ENCODE measurements at regions of chr16 and their contacts with region 1.

Region 1: DNA sequence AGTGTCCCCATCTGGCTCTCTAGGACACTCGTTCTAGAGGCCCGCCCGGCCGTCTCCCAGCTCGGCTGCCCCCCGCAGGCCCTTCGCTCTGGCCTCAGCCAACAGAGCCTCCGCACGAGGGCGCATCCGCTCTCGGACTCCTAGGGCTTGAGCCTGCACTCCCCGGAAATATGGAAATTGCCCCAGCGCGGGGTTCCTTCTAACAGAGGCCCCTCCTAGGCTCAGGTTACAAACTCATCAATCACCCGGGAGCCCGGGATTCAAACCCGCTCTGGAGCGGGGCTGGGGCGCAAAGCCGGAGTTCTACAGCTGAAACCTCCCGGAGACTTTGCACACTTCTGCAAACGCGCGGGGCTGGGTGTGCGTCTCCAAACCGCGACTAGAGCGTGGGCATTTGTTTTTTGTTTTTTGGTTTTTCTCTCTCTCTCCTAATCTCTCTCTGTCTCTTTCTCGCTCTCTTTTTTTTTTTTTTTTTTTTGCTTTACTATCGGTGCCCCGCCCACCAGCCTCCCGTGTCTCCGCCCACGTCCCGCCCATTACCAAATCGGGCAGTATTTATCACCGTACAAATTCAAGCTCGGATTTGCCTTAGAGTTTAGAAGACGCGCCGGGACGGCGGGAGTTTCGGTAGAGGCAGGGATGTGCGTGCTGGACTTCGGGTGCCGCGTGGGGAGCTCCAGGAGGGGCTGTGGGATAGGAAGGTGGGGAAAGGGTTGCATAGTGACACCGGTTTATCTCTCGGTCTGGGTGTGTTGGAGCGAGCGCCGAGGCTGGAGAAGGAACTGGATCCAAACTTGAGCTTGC is 2.4 kb upstream of the FOXL1 start:
- DNase-seq: no peak
- H3K4me3 ChIP-seq: peak overlapping the region; percentile 73
- CTCF ChIP-seq: peak; percentile 82

Region 2: GRCh38 chr16:86444261-86444660 is 131.7 kb before region 1 on chr16:
- CTCF ChIA-PET with region 1: no interaction called
- POLR2A ChIA-PET with region 1: no interaction called
- DNase-seq: no peak
- H3K4me3 ChIP-seq: no peak overlapping the region
- CTCF ChIP-seq: no peak

Region 3: GRCh38 chr16:86476956-86477530 is 98.9 kb before region 1 on chr16:
- CTCF ChIA-PET with region 1: no interaction called
- POLR2A ChIA-PET with region 1: no interaction called
- DNase-seq: no peak
- H3K4me3 ChIP-seq: no peak overlapping the region
- CTCF ChIP-seq: no peak

Region 4: DNA sequence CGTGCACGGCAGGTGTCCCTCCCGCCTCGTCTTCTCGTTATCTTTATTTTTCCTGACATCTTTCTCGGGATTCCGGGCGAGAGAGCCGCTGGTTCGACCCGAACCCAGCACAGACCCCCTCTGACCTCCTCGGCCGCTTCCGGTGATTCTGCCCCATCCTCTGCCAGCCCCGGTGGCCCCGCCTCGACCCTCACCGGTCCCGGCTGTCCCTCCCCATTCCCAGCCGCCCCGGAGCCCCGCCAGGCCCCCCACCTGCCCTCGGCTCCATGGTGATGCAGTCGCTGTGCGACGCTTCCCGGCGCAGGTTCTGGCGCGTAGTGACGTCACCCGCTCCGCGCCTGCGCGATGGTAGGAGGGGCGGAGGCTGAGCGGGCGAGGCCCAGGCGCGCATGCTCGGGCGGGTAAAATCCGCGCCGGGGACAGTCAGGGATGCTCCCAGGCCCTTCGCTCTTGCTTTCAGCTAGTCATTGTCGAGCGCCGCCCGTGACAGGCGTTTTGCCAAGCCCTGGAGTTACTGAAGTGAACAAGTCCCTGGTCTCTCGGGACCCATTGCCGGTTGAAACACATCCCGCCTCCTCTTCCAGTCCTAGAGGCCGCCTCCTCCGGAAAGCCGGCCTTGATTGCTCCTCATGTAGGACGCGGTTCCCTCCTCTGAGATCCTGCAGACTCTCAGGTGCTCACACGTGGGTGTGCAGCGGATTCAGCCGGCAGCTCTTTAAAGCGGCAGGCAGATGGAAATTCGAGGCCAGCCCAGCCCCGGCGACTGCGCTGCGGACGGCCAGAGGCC is 20.8 kb before region 1 on chr16 and contains the start of gene MTHFSD:
- CTCF ChIA-PET with region 1: no interaction called
- POLR2A ChIA-PET with region 1: no interaction called
- DNase-seq: no peak
- H3K4me3 ChIP-seq: peak within 1 kb of the TSS; percentile 96
- CTCF ChIP-seq: no peak

Region 5: DNA sequence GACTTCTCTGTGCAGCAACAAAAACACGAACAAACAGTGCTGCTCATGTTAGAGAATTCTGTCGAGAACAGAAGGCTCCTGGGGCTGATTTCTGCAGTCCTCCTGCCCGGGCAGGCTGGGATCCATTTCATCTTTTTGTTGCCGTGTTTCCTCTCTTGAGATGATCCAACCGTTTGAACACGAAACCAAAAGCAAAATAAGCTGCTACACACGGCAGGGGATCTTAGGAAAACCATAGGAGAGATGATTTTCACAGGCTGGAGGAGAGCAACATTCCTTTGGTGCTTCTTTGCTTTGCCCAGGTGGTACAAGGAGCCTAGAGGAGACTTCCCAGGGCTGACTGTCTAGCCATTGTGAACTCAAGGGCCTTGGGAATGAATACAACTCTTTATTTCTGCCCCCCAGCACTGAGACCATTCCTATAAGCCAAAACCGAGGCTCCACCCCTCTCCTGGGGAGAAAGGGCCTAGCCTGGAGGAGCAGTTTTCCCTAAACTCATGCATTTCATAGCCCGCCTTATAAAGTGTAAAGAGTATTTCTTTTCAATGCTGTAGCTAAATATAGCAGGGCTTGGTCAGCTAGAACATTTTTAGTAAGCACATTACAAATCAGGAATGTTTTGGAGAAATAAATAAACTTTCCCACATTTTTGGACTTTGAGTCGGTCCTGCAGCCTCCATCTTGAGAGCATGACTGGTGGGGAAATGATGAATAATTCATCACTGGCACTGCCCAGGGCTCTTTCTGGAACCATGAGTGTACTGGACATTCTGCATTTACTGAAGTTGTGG is 10.1 kb after region 1 on chr16:
- CTCF ChIA-PET with region 1: interaction called, 11 read pairs
- POLR2A ChIA-PET with region 1: interaction called, 17 read pairs
- DNase-seq: peak; percentile 84
- H3K4me3 ChIP-seq: no peak overlapping the region; the same call in none of the 2 replicates
- CTCF ChIP-seq: no peak

Region 6: DNA sequence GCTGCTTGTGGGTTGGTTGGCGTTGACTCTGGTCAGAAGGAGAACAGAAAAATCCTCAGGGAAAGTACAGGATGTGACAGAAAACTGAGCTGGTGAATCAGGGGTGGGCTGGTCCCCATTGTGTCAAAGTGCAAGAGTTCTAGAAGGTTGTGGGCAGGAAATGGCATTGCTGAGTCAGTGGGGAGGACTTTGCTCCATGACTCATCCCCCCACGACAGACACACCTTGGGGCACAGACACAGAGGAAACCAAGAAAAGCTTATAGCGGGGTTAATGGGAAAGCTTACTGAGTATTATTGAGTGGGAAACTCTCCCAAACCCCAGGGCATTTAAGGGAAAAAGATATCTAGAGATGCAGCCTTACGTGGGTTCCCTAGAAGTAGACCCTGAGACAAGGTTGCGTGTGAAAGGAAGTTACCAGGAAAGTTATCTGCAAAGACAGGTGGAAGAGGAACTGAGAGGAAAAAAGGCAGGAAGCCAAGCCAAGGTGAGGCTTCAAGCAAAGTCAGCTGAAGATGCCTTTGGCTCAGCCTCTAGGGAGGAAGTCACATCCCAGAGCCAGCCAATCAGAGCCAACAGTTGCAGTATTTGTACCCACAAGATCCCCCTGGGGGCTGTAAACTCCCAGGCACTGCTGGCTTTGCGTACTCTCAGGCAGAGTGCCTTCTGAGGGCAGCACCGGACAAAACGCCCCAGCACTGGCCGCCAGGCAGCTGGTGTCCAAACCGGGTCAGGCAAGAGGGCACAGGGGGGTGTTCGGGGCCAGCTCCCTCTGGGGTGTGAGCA is 88.8 kb after region 1 on chr16:
- CTCF ChIA-PET with region 1: interaction called, 6 read pairs
- POLR2A ChIA-PET with region 1: interaction called, 15 read pairs
- DNase-seq: peak; percentile 83
- H3K4me3 ChIP-seq: peak overlapping the region; percentile 34
- CTCF ChIP-seq: no peak

Region 7: DNA sequence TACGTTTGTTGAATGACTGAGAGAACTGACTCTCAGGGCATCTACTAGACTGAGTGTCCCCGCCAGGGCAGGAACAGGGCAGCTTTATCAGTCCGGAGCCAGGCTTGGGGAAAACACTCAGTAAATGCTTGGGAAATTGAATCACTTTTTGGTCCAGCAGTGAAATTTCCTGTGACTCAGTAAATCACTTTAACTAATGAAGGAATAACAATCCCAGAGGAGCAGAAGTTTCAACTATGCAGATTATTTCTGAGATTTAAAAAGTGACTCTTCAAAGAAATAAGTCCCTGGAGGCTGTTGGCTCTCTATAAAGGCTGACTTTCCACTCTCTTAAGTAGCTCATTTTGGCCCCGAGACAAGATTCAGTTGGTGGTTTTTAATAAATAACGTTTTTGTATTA is 104.2 kb after region 1 on chr16:
- CTCF ChIA-PET with region 1: no interaction called
- POLR2A ChIA-PET with region 1: interaction called, 28 read pairs
- DNase-seq: peak; percentile 86
- H3K4me3 ChIP-seq: no peak overlapping the region
- CTCF ChIP-seq: no peak

Measured in AG04449 (cell line).